ENCODE measurements at regions of chr9 and their contacts with region 1.

Region 1: GRCh38 chr9:12775679-12776512 is 1.1 kb downstream of the LURAP1L start:
- DNase-seq: no peak
- ATAC-seq: peak; percentile 88
- H3K4me3 ChIP-seq: peak overlapping the region; percentile 71 to 82
- H3K27ac ChIP-seq: peak overlapping the region; percentile 82
- H3K4me1 ChIP-seq: peaks cover 3% of the 10 kb centered on the region
- H3K27me3 ChIP-seq: no peaks in the 10 kb centered on the region
- CTCF ChIP-seq: peak; percentile 54

Region 2: DNA sequence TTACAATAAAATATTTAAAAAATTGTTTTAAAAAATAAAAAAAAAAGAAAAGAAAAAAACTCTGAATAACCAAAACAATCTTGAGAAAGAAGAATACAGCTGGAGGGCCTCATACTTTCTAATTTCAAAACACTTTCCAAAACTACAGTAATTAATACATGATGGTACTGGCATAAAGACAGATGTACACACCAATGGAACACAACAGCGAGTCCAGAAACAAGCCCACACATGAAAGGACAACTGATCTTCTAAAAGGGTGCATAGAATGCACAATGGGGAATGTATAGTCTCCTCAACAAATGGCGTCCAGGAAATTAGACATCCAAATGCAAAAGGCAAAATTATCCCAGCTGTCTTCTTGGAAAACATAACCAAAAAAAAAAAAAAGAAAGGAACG is 98.5 kb after region 1 on chr9:
- CTCF ChIA-PET with region 1: no interaction called
- POLR2A ChIA-PET with region 1: no interaction called
- in situ Hi-C with region 1: no loop called
- intact Hi-C with region 1: no loop called
- DNase-seq: no peak
- ATAC-seq: no peak
- H3K4me3 ChIP-seq: no peak overlapping the region
- H3K27ac ChIP-seq: no peak overlapping the region
- H3K4me1 ChIP-seq: no peaks in the 10 kb centered on the region
- H3K27me3 ChIP-seq: no peaks in the 10 kb centered on the region
- CTCF ChIP-seq: no peak

Region 3: GRCh38 chr9:12884737-12885414 is 109.0 kb after region 1 on chr9:
- CTCF ChIA-PET with region 1: no interaction called
- POLR2A ChIA-PET with region 1: no interaction called
- in situ Hi-C with region 1: no loop called
- intact Hi-C with region 1: loop called (anchors 5 kb)
- DNase-seq: peak; percentile 13
- ATAC-seq: 0 out of 2 replicates have a peak, but pooled peaks have one; percentile 62
- H3K4me3 ChIP-seq: no peak overlapping the region
- H3K27ac ChIP-seq: no peak overlapping the region; the same call in 1 of the 2 replicates
- H3K4me1 ChIP-seq: no peaks in the 10 kb centered on the region
- H3K27me3 ChIP-seq: no peaks in the 10 kb centered on the region
- CTCF ChIP-seq: peak; percentile 32; the same call in 1 of the 2 replicates

Region 4: DNA sequence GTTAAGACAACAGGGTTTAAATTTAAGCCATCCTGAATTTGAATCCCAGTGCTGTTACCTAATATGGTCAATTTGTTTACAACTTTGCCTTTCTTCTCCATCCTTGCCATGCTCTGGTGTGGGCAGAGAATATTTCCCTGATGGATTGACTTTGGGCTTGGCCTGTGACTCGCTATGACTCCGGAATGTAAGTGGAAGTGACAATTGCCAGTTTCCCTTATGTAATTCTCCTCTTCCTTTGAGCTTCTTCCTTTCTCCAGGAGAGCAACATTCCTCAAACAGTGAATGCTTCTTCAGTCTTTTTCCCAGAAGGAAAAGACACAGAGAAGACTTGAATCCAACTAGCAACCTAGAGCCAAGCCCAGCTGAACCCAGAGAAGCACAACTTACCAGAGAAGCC is 158.1 kb after region 1 on chr9:
- CTCF ChIA-PET with region 1: no interaction called
- POLR2A ChIA-PET with region 1: no interaction called
- in situ Hi-C with region 1: no loop called
- intact Hi-C with region 1: no loop called
- DNase-seq: peak; percentile 13
- ATAC-seq: no peak
- H3K4me3 ChIP-seq: no peak overlapping the region
- H3K27ac ChIP-seq: no peak overlapping the region
- H3K4me1 ChIP-seq: no peaks in the 10 kb centered on the region
- H3K27me3 ChIP-seq: no peaks in the 10 kb centered on the region
- CTCF ChIP-seq: no peak